GM13976 (cell line): ENCODE measurements at regions of chr2 and their contacts with region 1.

Region 1: DNA sequence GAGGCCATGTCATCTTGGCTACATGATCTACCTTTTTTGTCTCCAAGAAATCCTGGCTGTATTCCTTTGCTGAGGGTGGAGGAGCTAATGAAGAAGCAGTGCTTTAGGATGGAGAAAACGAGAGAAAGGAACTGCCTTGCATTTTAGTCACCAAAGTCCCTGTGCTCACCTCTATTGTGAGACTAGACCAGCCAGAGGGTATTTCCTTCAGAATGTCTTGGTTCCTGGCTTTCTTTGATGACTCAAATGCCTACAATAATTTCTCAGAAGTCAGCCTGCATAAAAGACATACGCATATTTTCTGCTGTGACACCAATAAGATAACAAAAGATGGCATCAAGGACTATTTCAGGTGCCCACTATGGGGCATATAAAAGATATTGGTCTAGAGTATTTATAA is 10.8 kb downstream of the SF3B6 start:
- DNase-seq: no peak
- CTCF ChIP-seq: no peak

Region 2: DNA sequence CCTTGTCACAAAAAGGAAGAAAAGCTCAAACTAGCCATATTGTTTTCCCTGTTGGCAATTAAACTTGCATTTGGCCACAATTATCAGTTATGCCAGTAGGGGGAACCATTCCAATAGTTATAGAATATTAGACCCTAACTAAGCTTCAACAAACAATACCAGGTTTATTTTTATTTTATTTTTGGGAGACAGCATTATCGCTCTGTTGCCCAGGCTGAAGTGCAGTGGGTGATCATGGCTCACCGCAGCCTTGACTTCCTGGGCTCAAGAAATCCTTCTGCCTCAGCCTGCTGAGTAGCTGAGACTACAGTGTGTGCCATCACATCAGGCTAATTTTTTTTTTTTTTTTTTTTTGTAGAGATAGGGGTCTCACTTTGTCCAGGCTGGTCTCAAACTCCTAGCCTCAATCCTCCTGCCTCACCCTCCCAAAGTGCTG is 240.5 kb before region 1 on chr2:
- in situ Hi-C with region 1: loop called (anchors 10 kb)
- DNase-seq: peak; percentile 57
- CTCF ChIP-seq: peak; percentile 64